Activated B cell treated with CpG ODN at 0.5 μM for 24 hours (primary cell): ENCODE measurements at regions of chr19 and their contacts with region 1.

Region 1: DNA sequence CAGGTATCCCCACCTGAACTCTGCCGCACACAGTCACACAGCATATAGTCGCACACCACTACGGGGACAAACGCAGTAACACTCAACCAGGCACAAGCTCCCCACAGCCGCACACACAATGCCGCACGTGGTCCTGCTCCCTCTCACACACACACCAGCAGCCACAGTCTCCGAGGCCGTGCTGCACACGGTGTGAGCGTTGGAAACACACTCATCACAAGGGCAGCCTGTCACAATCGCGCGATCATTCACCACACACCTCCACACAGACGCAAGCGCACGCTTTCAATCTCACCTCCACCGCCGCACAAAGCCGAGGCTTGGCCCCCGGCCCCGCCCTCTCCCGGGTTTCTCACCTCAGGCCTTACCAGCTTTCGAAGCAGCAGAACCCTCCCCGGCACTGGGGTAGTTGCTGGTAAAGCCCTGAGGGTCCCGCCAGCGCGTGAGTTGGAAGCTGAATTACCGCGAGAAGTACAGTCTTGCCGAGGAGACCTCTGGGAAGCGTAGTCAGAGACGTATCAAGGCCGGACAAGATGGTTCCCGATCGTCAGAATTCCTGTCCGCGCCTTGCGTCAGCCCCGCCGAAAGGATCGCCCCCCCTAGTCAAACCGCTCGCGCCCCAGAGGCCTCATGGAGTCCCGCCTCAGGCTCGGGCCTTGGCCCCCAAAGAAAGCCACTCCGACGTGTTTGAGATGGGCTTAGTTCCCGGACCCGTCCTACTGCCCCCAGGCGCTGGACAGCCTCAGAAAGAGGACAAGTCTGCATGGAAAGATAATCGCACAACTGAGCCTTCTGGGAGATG is at the start of gene ZNF566:
- DNase-seq: peak; percentile 81
- ATAC-seq: peak; percentile 92
- H3K4me3 Mint-ChIP-seq: peak within 1 kb of the TSS; percentile 98
- H3K27ac Mint-ChIP-seq: peak within 1 kb of the TSS; percentile 99
- H3K4me1 Mint-ChIP-seq: peaks cover 46% of the 10 kb centered on the region
- H3K27me3 Mint-ChIP-seq: no peaks in the 10 kb centered on the region
- CTCF ChIP-seq: no peak
- total RNA-seq, gene ZNF566: 14.1 and 16.6 TPM in 2 replicates

Region 2: DNA sequence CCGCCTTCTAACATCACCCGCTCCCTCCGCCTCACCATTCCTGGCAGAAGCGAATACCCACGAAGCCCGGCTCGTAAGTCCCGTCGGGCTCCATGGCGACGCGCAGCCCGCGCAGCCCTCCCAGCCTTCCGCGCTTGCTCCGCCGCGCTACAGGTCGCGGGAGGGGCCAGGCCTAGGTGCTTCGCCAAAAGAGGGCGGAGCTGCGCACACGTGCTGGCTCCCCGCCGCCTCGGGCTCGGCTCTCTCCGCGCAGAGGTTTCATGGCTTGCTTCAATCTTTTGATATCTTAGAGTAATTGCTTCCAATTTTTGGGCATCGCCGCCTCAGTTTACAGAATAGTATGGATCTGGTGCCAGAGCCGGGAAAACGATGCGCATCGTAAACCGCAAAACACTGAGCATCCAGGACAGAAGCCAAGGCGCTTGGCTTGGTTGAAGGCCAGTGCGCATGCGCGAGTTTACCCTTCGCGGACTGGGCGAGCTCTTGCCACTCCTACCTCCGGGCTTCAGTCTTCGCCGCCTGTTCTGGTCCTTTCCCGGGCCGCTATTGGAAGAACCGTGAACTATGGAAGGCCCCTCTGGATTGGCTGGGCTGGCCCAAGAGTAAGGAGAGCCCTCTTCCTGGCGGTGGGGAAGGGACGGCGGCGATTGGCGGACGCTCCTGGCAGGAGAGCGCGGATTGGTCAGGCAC is 374.4 kb before region 1 on chr19 and contains the start of gene POLR2I:
- CTCF ChIA-PET with region 1: no interaction called
- POLR2A ChIA-PET with region 1: no interaction called
- intact Hi-C with region 1: no loop called
- DNase-seq: peak; percentile 93
- ATAC-seq: peak; percentile 86
- H3K4me3 Mint-ChIP-seq: peak within 1 kb of the TSS; percentile 92
- H3K27ac Mint-ChIP-seq: peak within 1 kb of the TSS; percentile 97
- H3K4me1 Mint-ChIP-seq: peaks cover 43% of the 10 kb centered on the region
- H3K27me3 Mint-ChIP-seq: no peaks in the 10 kb centered on the region
- CTCF ChIP-seq: no peak
- total RNA-seq, gene POLR2I: 46.6 and 51.6 TPM in 2 replicates

Region 3: GRCh38 chr19:36214386-36215275 is 274.7 kb before region 1 on chr19 and contains the starts of genes ZNF146 and ZNF565:
- CTCF ChIA-PET with region 1: no interaction called
- POLR2A ChIA-PET with region 1: interaction called, 18 read pairs
- intact Hi-C with region 1: loop called (anchors 1 kb)
- DNase-seq: peak; percentile 90
- ATAC-seq: peak; percentile 90
- H3K4me3 Mint-ChIP-seq: no peak within 1 kb of the TSS
- H3K27ac Mint-ChIP-seq: no peak within 1 kb of the TSS
- H3K4me1 Mint-ChIP-seq: peaks cover 29% of the 10 kb centered on the region
- H3K27me3 Mint-ChIP-seq: no peaks in the 10 kb centered on the region
- CTCF ChIP-seq: no peak
- total RNA-seq, gene ZNF146: 57.8 and 63.2 TPM in 2 replicates
- total RNA-seq, gene ZNF565: 2.3 and 3.2 TPM in 2 replicates

Region 4: DNA sequence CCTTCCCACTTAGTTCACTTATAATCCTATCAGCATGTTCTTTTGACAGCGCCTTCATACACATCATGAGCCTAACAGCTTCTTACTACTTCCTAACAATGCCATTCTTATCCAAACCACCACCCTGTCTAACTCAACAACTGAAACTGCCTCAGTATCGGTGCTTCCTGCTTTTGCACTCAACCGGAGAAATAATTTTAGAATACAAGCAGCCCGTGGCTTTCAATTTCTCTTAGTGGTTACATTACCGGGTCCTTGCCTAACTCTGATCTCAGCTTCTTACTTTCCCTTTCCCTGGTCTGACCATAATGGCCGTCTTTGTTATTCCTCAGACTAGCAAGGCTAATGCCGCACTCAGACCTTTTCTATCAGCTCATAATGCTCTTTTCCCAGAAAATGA is 87.8 kb before region 1 on chr19:
- CTCF ChIA-PET with region 1: no interaction called
- POLR2A ChIA-PET with region 1: interaction called, 7 read pairs
- intact Hi-C with region 1: loop called (anchors 2 kb)
- DNase-seq: no peak
- ATAC-seq: peak; percentile 95
- H3K4me3 Mint-ChIP-seq: peak overlapping the region; percentile 69
- H3K27ac Mint-ChIP-seq: peak overlapping the region; percentile 85
- H3K4me1 Mint-ChIP-seq: peaks cover 22% of the 10 kb centered on the region
- H3K27me3 Mint-ChIP-seq: no peaks in the 10 kb centered on the region
- CTCF ChIP-seq: no peak

Region 5: GRCh38 chr19:36573020-36573885 is 83.9 kb after region 1 on chr19 and contains the start of gene ZNF529:
- CTCF ChIA-PET with region 1: no interaction called
- POLR2A ChIA-PET with region 1: interaction called, 23 read pairs
- intact Hi-C with region 1: loop called (anchors 2 kb)
- DNase-seq: peak; percentile 79
- ATAC-seq: peak; percentile 91
- H3K4me3 Mint-ChIP-seq: peak within 1 kb of the TSS; percentile 89
- H3K27ac Mint-ChIP-seq: peak within 1 kb of the TSS; percentile 86
- H3K4me1 Mint-ChIP-seq: peaks cover 33% of the 10 kb centered on the region
- H3K27me3 Mint-ChIP-seq: no peaks in the 10 kb centered on the region
- CTCF ChIP-seq: no peak
- total RNA-seq, gene ZNF529: 21.9 and 23.6 TPM in 2 replicates

Region 6: DNA sequence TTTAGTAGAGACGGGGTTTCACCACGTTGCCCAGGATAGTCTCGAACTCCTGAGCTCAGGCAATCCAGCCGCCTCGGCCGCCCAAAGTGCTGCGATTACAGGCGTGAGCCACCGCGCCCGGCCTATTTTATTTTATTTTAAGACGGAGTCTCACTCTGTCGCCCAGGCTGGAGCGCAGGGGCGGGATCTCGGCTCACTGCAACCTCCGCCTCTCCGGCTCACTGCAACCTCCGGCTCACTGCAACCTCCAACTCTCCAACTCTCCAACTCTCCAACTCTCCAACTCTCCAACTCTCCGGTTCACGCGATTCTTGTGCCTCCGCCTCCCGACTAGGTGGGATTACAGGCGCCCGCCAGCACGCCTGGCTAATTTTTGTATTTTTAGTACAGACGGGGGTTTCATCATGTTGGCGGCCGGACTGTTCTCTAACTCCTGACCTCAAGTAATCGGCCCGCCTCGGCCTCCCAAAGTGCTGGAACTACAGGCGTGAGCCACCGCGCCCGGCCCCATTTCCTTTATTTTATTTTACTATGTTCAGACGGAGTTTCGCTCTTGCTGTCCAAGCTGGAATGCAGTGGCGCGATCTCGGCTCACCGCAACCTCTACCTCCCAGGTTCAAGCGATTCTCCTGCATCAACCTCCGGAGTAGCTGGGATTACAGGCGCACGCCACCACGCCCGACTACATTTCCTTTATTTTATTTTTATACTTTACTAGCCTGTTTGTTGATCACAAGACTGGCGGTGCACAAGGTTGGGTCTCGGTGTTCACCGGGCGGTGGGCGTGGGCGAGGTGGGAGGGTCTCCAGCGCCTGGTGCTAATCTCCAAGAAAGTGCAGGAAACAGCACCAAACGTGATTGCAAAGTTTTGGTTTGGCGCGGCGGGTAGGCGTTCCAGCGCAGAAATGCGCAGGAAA is 307.0 kb after region 1 on chr19:
- CTCF ChIA-PET with region 1: no interaction called
- POLR2A ChIA-PET with region 1: no interaction called
- intact Hi-C with region 1: loop called (anchors 1 kb)
- DNase-seq: no peak
- ATAC-seq: no peak
- H3K4me3 Mint-ChIP-seq: peak overlapping the region; percentile 96
- H3K27ac Mint-ChIP-seq: peak overlapping the region; percentile 99
- H3K4me1 Mint-ChIP-seq: peaks cover 24% of the 10 kb centered on the region
- H3K27me3 Mint-ChIP-seq: peaks cover 4% of the 10 kb centered on the region
- CTCF ChIP-seq: no peak

Region 7: DNA sequence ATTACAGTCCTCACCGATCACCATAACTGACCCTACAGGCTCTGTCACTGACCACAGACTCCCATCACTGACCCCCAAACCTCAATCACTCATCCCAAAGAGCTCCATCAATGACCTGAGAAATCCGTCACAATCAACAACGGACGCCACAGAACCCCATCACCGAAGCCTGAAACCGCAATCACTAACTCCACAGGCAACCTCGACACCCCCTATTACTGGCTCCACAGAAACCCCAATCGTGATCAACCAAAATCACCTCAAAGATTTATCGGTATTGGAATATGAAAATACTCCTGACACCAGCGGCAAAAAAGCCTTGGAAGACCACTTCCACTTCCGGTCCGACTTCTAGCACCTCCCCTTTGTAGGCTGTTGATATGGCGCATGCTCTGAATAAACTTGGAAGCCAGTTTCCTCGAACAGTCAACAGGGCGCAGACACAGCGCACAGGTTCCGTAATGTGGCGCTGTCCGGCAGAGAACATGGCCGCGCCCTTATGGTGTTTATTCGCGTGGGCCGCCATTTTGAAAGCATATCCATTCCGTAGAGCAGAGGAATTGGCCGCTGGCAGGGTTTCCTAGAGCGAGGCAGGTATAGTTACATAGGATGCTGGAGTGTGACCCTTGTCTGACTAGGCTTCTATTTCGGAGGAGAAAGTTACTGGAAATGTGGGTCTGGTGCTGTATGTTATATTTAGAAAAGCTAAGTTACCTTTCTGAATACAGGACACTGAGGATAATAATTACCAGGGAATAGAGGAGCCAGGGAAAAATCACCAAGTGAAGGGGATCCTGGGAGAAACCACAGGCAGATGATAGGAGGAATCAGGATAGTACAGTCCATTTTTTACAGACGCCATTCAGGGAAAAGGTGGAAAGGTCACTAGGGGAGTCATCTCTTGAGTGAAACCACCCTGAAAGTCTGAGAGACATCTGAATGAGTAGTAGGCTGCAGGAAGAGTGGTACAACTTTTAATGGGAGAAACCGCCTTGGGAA is 683.3 kb after region 1 on chr19 and contains the start of gene ZNF585A:
- CTCF ChIA-PET with region 1: no interaction called
- POLR2A ChIA-PET with region 1: interaction called, 3 read pairs
- intact Hi-C with region 1: loop called (anchors 1 kb)
- DNase-seq: peak; percentile 77
- ATAC-seq: peak; percentile 99
- H3K4me3 Mint-ChIP-seq: peak within 1 kb of the TSS; percentile 52
- H3K27ac Mint-ChIP-seq: no peak within 1 kb of the TSS
- H3K4me1 Mint-ChIP-seq: peaks cover 4% of the 10 kb centered on the region
- H3K27me3 Mint-ChIP-seq: no peaks in the 10 kb centered on the region
- CTCF ChIP-seq: no peak
- total RNA-seq, gene ZNF585A: 14.4 and 17.0 TPM in 2 replicates